ENCODE measurements at regions of chr17 and their contacts with region 1.

Region 1: DNA sequence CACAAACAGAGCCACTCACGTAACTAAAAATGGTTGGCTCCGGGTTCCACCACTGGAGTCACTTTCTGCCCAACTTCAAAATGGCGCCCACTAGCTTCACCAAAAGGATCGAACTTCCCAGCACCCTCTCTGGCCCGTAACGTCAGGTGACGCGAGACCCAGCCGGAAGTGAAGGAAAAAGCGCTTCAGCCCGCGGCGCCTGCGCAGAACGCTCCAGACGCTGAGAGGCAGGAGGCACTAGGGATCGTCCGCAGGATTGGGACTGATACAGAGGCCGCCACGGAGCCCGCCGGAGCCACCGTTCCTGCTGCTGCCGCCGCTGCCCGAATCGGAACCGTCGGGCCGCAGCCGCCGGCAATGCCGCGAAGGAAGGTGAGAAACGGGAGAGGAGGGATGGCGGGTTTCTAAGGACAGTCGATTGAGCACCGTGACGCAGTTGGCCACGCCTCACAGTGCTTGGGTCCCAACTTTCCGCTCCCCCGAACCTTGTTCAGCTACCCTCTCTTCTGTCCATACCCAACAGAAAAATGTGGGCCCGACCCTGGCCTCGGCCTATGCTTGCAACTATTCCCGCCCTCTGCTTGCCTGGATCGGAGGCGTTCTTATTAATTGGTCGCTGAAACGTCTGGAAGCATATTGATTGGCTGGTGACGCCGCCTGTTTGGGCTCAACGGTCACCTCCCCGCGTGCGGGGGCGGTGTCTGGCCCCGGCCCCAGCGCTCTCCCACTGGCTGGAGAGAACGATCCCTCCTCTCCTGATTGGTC is at the start of gene KAT7:
- DNase-seq: peak; percentile 100
- H3K4me3 ChIP-seq: peak within 1 kb of the TSS; percentile 59 to 82 (median 77)
- H3K27ac ChIP-seq: peak within 1 kb of the TSS; percentile 94
- H3K4me1 ChIP-seq: peaks cover 16% of the 10 kb centered on the region
- H3K27me3 ChIP-seq: no peaks in the 10 kb centered on the region
- CTCF ChIP-seq: no peak
- POLR2A ChIP-seq: peak; percentile 94
- total RNA-seq, gene KAT7: 64.9 and 66.2 TPM in 2 replicates

Region 2: DNA sequence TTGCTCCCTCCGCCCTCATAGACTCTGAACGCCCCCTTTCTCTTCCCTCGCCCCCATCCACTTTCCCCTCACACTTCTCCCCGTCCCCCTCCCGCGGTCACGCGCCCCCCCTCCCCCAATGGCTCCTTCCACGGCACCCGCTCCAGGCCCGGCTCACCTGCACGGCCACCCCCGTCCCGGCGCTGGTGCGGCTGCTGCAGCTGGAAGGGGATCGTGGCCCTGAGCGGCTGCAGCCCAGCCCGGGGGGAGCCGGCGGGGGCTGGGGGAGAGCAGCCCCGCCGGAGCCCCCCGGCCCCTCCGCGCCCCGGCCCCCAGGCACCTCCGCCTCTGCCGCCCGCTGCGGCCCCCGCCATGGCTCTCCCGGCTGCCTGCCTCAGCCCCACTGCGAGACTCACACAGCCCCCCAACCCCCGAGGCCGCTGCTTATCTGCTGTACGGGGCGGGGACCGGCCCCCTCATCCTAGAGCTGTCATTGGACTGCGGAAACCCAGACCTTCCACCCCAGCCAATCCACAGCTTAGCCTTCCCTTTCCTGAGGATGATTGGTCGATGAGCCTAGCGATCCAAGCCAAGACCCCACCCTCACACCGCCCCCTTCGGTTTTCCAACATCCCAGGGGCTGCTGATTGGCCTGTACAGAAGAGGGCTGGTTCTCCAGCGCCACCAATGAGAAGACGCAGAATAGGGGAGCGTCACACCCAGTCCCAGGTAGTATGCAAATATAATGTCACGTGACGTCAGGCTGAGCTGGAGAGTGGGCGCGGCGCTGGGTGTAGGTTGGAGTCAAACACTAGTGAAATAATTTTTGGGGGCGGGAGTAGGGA is 24.7 kb before region 1 on chr17 and contains the start of gene FAM117A:
- CTCF ChIA-PET with region 1: interaction called, 6 read pairs
- POLR2A ChIA-PET with region 1: interaction called, 9 read pairs
- dilution Hi-C with region 1: no loop called
- intact Hi-C with region 1: loop called (anchors 1 kb)
- DNase-seq: peak; percentile 99
- H3K4me3 ChIP-seq: peak within 1 kb of the TSS; percentile 63 to 86 (median 67)
- H3K27ac ChIP-seq: no peak within 1 kb of the TSS
- H3K4me1 ChIP-seq: peaks cover 14% of the 10 kb centered on the region
- H3K27me3 ChIP-seq: peaks cover 15 to 42% of the 10 kb centered on the region in 2 experiments
- CTCF ChIP-seq: no peak
- POLR2A ChIP-seq: peak; percentile 54
- total RNA-seq, gene FAM117A: 10.4 and 12.2 TPM in 2 replicates

Region 3: DNA sequence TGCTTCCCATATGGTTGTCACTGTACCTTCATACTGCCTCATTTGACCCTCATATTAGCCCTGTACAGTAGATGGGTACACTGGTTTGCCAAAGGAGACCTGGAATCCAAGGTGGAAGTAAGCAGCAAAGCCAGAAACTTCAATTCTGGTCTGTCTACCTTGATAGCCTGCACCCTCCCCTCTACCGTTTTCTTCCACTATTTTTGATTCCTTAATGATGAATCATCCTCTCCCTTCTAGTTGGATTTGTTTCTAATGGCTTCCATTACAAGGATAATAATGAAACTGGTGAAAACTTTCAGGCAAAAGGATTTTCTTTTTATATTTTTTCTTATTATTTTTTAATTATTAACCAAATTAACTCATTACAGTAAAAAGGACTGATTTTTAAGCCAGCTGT is 41.9 kb after region 1 on chr17:
- CTCF ChIA-PET with region 1: interaction called, 5 read pairs
- POLR2A ChIA-PET with region 1: no interaction called
- dilution Hi-C with region 1: no loop called
- intact Hi-C with region 1: loop called (anchors 1 kb)
- DNase-seq: no peak
- H3K4me3 ChIP-seq: no peak overlapping the region
- H3K27ac ChIP-seq: peak overlapping the region; percentile 77
- H3K4me1 ChIP-seq: peaks cover 76% of the 10 kb centered on the region
- H3K27me3 ChIP-seq: no peaks in the 10 kb centered on the region
- CTCF ChIP-seq: no peak
- POLR2A ChIP-seq: no peak

Region 4: GRCh38 chr17:49836111-49837030 is 47.7 kb after region 1 on chr17:
- CTCF ChIA-PET with region 1: interaction called, 5 read pairs
- POLR2A ChIA-PET with region 1: no interaction called
- dilution Hi-C with region 1: no loop called
- intact Hi-C with region 1: loop called (anchors 1 kb)
- DNase-seq: peak; percentile 94
- H3K4me3 ChIP-seq: peak overlapping the region in 1 of 3 experiments; percentile 21
- H3K27ac ChIP-seq: peak overlapping the region; percentile 77
- H3K4me1 ChIP-seq: peaks cover 66% of the 10 kb centered on the region
- H3K27me3 ChIP-seq: no peaks in the 10 kb centered on the region
- CTCF ChIP-seq: no peak
- POLR2A ChIP-seq: peak; percentile 63

Region 5: DNA sequence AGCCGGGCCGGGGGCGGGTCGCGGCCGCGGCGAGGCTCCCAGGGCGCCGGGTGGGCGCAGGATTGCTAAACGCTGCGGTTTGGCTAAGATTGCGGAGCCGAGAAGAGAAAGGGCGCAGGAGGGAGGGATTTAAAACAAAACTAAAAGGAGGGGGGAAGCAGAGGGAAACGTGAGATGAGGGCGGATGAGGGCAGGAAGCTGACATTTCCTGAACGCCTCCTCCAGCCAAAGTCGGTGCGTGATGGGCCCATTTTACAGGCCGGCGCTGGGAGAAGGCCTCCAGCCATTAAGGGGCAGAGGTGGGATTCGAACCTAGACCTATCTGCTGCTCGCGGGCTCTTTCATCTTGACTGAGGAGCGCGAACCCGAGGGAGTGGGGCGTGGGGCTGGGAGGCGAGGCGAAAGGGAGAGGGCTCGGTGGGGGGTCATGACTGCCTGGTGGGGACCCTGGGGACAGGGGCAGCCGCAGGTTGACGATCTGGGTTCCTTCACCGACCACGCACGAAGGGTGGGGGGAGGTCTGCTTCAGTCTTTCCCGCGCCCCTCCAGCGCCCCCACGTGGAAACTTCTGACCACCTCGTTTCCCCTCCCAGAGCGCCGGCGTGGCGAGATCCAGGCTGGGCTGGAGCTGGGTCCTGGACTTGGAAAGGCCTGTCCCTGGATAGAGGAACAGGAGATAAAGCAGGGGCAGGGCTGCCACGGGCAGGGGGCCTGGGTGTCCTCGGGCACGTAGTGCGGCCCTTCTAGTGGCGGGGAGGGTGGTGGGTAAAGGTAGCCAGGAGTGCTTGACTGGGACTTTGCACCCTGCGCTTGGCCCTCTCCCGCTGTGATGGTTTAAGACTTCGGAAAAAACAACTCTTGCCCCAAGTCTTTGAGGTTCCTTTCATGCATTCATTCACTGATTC is 63.0 kb after region 1 on chr17:
- CTCF ChIA-PET with region 1: interaction called, 7 read pairs
- POLR2A ChIA-PET with region 1: no interaction called
- dilution Hi-C with region 1: no loop called
- intact Hi-C with region 1: loop called (anchors 1 kb)
- DNase-seq: peak; percentile 73
- H3K4me3 ChIP-seq: peak overlapping the region; percentile 18 to 41 (median 36)
- H3K27ac ChIP-seq: peak overlapping the region; percentile 1
- H3K4me1 ChIP-seq: peaks cover 6% of the 10 kb centered on the region
- H3K27me3 ChIP-seq: no peaks in the 10 kb centered on the region
- CTCF ChIP-seq: peak; percentile 71 to 92
- POLR2A ChIP-seq: no peak

Region 6: GRCh38 chr17:49910094-49910857 is 121.6 kb after region 1 on chr17:
- CTCF ChIA-PET with region 1: no interaction called
- POLR2A ChIA-PET with region 1: no interaction called
- dilution Hi-C with region 1: no loop called
- intact Hi-C with region 1: no loop called
- DNase-seq: peak; percentile 2
- H3K4me3 ChIP-seq: no peak overlapping the region
- H3K27ac ChIP-seq: no peak overlapping the region
- H3K4me1 ChIP-seq: no peaks in the 10 kb centered on the region
- H3K27me3 ChIP-seq: peaks cover 71 to 78% of the 10 kb centered on the region in 2 experiments
- CTCF ChIP-seq: no peak
- POLR2A ChIP-seq: no peak

Measured in endothelial cell of umbilical vein (primary cell).